ENCODE measurements at regions of chr7 and their contacts with region 1.

Region 1: DNA sequence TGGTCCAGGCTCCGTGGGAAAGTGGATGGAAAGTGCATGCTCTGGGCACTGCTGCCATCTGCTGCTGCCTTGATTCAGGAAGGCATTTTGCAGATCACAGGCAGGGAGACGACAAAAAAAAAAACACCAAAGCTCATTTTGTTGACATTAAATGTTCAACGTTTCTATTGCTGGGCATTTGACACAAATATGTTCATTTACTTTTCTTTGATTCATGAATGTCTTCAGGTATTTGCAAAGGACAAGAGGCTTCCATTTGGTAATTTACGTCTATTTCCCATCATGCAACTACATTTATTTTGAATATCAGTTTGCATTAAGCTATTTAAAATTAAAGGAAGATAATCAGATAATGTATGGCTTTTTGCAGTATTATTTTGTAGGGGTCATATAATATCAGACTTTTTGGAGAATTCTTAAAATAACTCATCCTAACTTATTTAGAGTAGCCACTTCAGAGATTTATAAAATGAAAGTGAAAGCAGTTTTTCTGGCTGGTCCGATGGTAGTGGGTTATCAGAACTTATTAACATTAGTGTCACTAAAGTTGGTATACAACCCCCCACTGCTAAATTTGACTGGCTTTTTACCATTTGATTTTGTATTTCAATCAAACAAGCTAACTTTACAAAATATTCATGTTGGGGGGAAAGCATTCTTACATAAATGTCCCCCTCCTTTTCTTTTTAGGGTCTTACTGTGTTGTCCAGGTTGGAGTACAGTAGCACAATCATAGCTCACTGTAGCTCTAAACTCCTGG is 65.3 kb downstream of the PDIA4 start:
- DNase-seq: peak; percentile 54 to 70
- ATAC-seq: peak; percentile 75 to 86 (median 82)
- H3K4me3 ChIP-seq: peak overlapping the region; percentile 36 to 72 (median 60)
- H3K27ac ChIP-seq: peak overlapping the region in 9 of 10 donors; percentile 29 to 87 (median 77)
- H3K4me1 ChIP-seq: peaks cover 0 to 21% (median 13%) of the 10 kb centered on the region in 9 donors
- H3K27me3 ChIP-seq: no peaks in the 10 kb centered on the region
- CTCF ChIP-seq: peak; percentile 57 to 94 (median 76)

Region 2: GRCh38 chr7:148255333-148255732 is 707.7 kb before region 1 on chr7:
- intact Hi-C with region 1: loop called in 3 of 10 experiments (anchors 10 kb)
- DNase-seq: no peak
- ATAC-seq: no peak
- H3K4me3 ChIP-seq: no peak overlapping the region
- H3K27ac ChIP-seq: no peak overlapping the region
- H3K4me1 ChIP-seq: no peaks in the 10 kb centered on the region
- H3K27me3 ChIP-seq: peaks cover 0 to 32% (median 7%) of the 10 kb centered on the region in 7 donors
- CTCF ChIP-seq: peak in 6 of 9 donors; percentile 14 to 42 (median 22)

Region 3: GRCh38 chr7:148503875-148504487 is 459.0 kb before region 1 on chr7:
- intact Hi-C with region 1: loop called (anchors 1 to 5 kb)
- DNase-seq: no peak
- ATAC-seq: no peak
- H3K4me3 ChIP-seq: no peak overlapping the region
- H3K27ac ChIP-seq: no peak overlapping the region
- H3K4me1 ChIP-seq: peaks cover 0 to 5% (median 0%) of the 10 kb centered on the region in 9 donors
- H3K27me3 ChIP-seq: peaks cover 0 to 23% (median 16%) of the 10 kb centered on the region in 7 donors
- CTCF ChIP-seq: peak; percentile 59 to 91 (median 79)

Region 4: GRCh38 chr7:148698397-148699023 is 264.5 kb before region 1 on chr7 and contains the start of gene CUL1:
- intact Hi-C with region 1: loop called in 3 of 10 experiments (anchors 10 kb)
- DNase-seq: peak; percentile 89 to 92
- ATAC-seq: peak; percentile 86 to 94 (median 90)
- H3K4me3 ChIP-seq: peak within 1 kb of the TSS; percentile 50 to 97 (median 93)
- H3K27ac ChIP-seq: peak within 1 kb of the TSS; percentile 89 to 100 (median 96)
- H3K4me1 ChIP-seq: peaks cover 10 to 53% (median 45%) of the 10 kb centered on the region in 9 donors
- H3K27me3 ChIP-seq: no peaks in the 10 kb centered on the region
- CTCF ChIP-seq: no peak
- total RNA-seq, gene CUL1: 40.6 to 53.4 (median 45.0) TPM

Region 5: DNA sequence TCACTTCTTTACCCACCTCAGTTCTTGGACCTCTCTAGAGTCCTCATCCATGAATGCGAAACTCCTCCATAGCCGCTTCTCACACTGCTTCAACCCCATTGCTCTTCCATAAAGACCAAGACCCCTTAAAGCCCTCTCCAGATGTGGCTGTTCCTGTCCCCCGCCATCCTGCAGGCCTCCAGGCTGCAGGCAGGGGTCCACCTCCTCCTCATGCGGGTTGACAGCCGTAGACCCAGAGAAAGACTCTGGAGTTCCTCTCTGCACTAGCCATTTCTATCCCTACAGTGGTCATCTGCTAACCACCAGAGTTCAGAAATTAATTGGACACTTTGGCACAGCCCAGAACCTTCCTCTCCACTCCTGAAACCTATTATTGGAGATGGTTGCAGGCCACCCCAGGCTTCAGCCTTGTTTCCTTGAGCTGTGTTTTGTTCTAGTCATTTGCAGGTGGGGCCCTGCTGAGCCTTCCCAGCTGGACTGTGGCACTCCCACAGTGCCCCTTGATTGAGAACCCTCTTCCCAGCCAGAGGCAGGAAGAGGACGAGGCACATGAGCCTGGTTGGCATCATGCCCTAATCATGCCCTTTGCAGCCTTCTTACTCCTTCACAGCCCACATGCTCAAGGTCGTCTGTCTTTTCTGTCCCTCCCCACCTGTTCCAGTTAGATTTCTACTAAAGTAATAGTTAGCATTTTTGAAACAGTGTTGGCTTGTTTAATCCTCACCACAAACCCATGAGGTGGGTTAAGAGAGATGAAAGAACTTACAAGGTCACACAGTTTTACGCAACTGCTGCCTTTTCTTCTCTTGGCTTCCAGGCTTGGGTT is 240.4 kb before region 1 on chr7:
- intact Hi-C with region 1: no loop called
- DNase-seq: peak in 1 of 2 donors; percentile 25
- ATAC-seq: peak; percentile 11 to 82 (median 63)
- H3K4me3 ChIP-seq: no peak overlapping the region
- H3K27ac ChIP-seq: peak overlapping the region in 2 of 10 donors; percentile 4 to 21
- H3K4me1 ChIP-seq: peaks cover 17 to 89% (median 63%) of the 10 kb centered on the region in 9 donors
- H3K27me3 ChIP-seq: no peaks in the 10 kb centered on the region
- CTCF ChIP-seq: no peak

Region 6: DNA sequence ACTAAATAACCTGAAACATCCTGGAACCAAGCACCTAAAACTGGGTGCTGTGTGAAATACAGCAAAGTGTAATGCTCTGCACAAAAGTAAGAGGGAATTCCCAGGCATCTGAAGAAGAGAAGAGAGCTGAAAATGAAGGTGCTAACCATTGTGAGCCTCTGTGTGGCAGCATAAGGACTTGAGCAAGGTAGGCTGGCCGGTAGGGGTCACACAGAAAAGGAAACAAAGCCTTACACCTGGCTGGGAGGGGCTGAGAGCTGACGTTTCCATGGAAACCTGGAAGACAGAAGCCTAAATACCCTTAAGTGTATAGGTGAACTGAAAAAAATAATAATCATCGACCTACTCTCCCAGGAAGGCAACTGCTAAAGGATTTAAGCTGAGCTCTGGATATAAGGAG is 215.7 kb before region 1 on chr7:
- intact Hi-C with region 1: no loop called
- DNase-seq: no peak
- ATAC-seq: no peak
- H3K4me3 ChIP-seq: no peak overlapping the region
- H3K27ac ChIP-seq: no peak overlapping the region
- H3K4me1 ChIP-seq: no peaks in the 10 kb centered on the region
- H3K27me3 ChIP-seq: no peaks in the 10 kb centered on the region
- CTCF ChIP-seq: no peak

Region 7: GRCh38 chr7:148884299-148885022 is 78.5 kb before region 1 on chr7:
- intact Hi-C with region 1: loop called in 4 of 10 experiments (anchors 1 to 10 kb)
- DNase-seq: peak; percentile 93 to 94
- ATAC-seq: peak; percentile 99 to 100 (median 100)
- H3K4me3 ChIP-seq: peak overlapping the region; percentile 50 to 97 (median 94)
- H3K27ac ChIP-seq: peak overlapping the region; percentile 73 to 96 (median 93)
- H3K4me1 ChIP-seq: peaks cover 0 to 19% (median 8%) of the 10 kb centered on the region in 9 donors
- H3K27me3 ChIP-seq: no peaks in the 10 kb centered on the region
- CTCF ChIP-seq: peak in 1 of 9 donors; percentile 20

Region 8: GRCh38 chr7:149028346-149029109 is 65.5 kb after region 1 on chr7 and contains the start of gene PDIA4:
- intact Hi-C with region 1: loop called in 1 of 10 experiments (anchors 10 kb)
- DNase-seq: peak; percentile 99 to 100
- ATAC-seq: peak; percentile 95 to 99 (median 98)
- H3K4me3 ChIP-seq: peak within 1 kb of the TSS; percentile 63 to 92 (median 84)
- H3K27ac ChIP-seq: peak within 1 kb of the TSS; percentile 44 to 95 (median 88)
- H3K4me1 ChIP-seq: peaks cover 0 to 35% (median 22%) of the 10 kb centered on the region in 9 donors
- H3K27me3 ChIP-seq: no peaks in the 10 kb centered on the region
- CTCF ChIP-seq: peak in 6 of 9 donors; percentile 8 to 49 (median 33)
- total RNA-seq, gene PDIA4: 18.2 to 49.2 (median 24.6) TPM